ENCODE measurements at regions of chr20 and their contacts with region 1.

Region 1: GRCh38 chr20:62900052-62900691 is 26.1 kb downstream of the DIDO1 start:
- DNase-seq: peak; percentile 88
- ATAC-seq: peak; percentile 93
- H3K4me3 Mint-ChIP-seq: peak overlapping the region; percentile 41
- H3K27ac Mint-ChIP-seq: peak overlapping the region; percentile 70
- H3K4me1 Mint-ChIP-seq: peaks cover 52% of the 10 kb centered on the region
- H3K27me3 Mint-ChIP-seq: no peaks in the 10 kb centered on the region

Region 2: GRCh38 chr20:62782149-62782892 is 117.9 kb before region 1 on chr20:
- CTCF ChIA-PET with region 1: no interaction called
- DNase-seq: no peak
- ATAC-seq: no peak
- H3K4me3 Mint-ChIP-seq: no peak overlapping the region
- H3K27ac Mint-ChIP-seq: no peak overlapping the region
- H3K4me1 Mint-ChIP-seq: peaks cover 12% of the 10 kb centered on the region
- H3K27me3 Mint-ChIP-seq: no peaks in the 10 kb centered on the region

Region 3: DNA sequence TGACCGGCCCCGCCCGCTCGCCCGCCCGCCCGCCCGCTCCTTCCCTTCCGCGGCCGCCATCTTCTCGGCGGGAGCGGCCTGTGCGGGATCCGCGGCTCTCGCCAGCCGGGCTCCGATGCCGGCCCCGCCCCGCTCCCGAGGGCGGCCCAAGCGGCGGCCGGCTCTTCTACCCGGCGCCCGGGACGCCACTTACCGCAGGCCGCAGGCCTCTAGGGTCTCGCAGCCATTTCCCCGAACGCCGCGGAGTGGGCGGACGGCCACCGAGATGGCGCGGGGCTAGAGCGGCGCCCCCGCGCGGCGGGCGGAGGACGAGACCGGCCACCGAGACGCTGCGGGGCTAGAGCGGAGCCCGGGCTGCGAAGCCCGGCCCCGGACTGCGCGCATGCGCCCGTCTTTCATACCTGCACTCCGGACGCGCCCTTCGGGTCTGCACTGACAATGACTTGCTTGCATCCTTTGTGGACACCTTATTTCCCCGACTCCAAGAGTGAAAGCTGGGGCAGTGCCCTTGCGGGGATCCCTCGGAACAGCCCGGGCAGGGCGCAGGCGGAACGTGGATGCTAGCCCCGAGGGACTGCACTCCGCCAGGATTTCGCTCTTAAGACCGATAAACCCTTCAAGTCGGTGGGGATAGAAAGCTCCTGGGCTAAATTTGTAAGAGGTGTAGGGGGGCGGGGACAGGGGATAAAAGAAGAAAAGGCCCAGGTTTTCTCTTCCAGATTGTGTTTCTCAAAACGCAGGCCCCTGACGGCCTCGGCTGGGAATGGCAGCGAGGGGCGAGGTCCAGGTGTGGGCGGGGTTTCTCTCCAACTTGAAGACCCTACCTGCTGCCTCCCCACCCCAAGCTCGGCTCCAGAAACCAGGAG is 26.3 kb after region 1 on chr20 and contains the start of gene DIDO1:
- CTCF ChIA-PET with region 1: interaction called, 268 read pairs
- DNase-seq: peak; percentile 92
- ATAC-seq: peak; percentile 75
- H3K4me3 Mint-ChIP-seq: peak within 1 kb of the TSS; percentile 88
- H3K27ac Mint-ChIP-seq: peak within 1 kb of the TSS; percentile 94
- H3K4me1 Mint-ChIP-seq: peaks cover 68% of the 10 kb centered on the region
- H3K27me3 Mint-ChIP-seq: no peaks in the 10 kb centered on the region
- total RNA-seq, gene DIDO1: 64.6 to 87.0 TPM

Region 4: GRCh38 chr20:63042448-63043071 is 142.4 kb after region 1 on chr20:
- CTCF ChIA-PET with region 1: no interaction called
- DNase-seq: no peak
- ATAC-seq: no peak
- H3K4me3 Mint-ChIP-seq: no peak overlapping the region
- H3K27ac Mint-ChIP-seq: no peak overlapping the region
- H3K4me1 Mint-ChIP-seq: no peaks in the 10 kb centered on the region
- H3K27me3 Mint-ChIP-seq: peaks cover 29% of the 10 kb centered on the region